Activated naive CD8-positive, alpha-beta T cell treated with anti-CD3 and anti-CD28 coated beads, Interleukin-2, amount 10 ng/mL, durations not matched to agents 7 days and 5 days (primary cell): ENCODE measurements at regions of chr1 and their contacts with region 1.

Region 1: DNA sequence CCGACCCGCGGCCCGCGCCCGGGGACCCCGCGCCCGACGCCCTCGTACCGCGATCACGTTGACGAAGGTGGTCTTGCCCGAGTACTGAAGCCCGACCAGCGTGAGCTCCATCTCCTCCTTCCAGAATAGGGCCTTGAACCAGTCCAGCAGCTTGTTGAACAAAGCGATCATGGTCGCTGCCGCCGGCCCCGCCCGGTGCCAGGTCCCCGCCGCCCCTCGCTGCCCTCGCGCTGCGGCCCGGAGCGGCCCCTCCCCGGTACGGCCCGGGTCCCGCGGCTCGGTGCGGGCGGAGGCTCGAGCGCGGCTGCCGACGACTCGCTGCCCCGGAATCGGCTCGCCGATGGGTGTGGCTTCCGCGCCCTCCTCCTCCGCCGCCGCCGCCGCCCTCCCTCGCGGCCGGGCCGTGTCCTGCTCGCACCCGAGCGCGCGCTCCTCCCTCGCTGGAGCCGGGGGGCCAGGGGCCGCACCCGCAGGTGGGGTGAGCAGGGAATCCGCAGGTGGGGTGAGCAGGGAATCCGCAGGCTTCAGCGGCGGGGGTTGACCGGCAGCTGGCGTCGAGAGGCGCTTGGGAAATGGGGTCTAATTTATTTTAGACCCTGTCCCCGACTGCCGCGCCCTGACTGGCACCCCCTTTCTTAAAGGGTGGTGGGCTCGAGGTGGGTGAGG is at the start of gene ARL8A:
- DNase-seq: peak; percentile 84
- ATAC-seq: peak; percentile 79
- H3K4me3 Mint-ChIP-seq: peak within 1 kb of the TSS; percentile 97
- H3K27ac Mint-ChIP-seq: peak within 1 kb of the TSS; percentile 88
- H3K4me1 Mint-ChIP-seq: peaks cover 25% of the 10 kb centered on the region
- H3K27me3 Mint-ChIP-seq: no peaks in the 10 kb centered on the region
- total RNA-seq, gene ARL8A: 45.9 to 56.5 TPM

Region 2: DNA sequence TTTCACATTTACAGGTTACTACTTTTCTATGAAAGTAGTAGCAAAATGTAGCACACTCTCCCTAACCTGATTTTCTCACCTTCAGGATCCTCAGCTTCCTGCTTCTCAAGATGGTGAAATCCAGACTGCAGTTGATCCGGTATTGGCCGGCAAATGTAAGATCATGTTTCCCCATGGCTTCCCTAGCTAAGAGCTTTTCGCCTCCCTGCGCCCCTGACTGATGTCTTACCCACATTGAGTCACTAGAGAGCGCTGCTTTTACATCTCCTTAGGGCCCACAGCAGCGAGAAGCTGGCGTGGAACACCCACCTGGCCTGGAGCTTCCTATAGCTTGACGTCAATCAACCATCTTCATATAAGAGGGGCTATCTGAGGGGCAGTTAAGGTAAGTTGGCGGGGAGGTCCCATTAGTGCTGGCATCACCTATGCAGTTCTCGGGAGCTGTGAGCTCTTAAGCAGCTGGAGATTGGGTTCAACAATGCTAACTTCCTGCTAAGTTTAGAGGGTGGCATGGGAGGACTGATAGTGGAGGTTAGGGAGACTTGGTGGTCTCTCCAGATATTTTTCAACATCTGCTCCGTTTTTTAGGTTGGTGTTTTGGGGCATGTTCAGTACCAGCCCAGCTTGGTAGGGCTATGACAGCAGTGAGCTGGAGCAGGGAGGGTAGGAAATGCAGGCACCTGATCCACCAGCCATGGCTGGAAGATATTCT is 10.4 kb after region 1 on chr1:
- POLR2A ChIA-PET with region 1: interaction called, 18 read pairs
- DNase-seq: peak; percentile 49
- ATAC-seq: peak; percentile 54
- H3K4me3 Mint-ChIP-seq: no peak overlapping the region
- H3K27ac Mint-ChIP-seq: peak overlapping the region; percentile 66
- H3K4me1 Mint-ChIP-seq: peaks cover 41% of the 10 kb centered on the region
- H3K27me3 Mint-ChIP-seq: no peaks in the 10 kb centered on the region

Region 3: GRCh38 chr1:202160377-202160940 is 15.9 kb after region 1 on chr1 and contains the start of gene PTPN7:
- POLR2A ChIA-PET with region 1: interaction called, 40 read pairs
- DNase-seq: peak; percentile 72
- ATAC-seq: peak; percentile 37
- H3K4me3 Mint-ChIP-seq: peak within 1 kb of the TSS; percentile 96
- H3K27ac Mint-ChIP-seq: peak within 1 kb of the TSS; percentile 100
- H3K4me1 Mint-ChIP-seq: peaks cover 59% of the 10 kb centered on the region
- H3K27me3 Mint-ChIP-seq: no peaks in the 10 kb centered on the region
- total RNA-seq, gene PTPN7: 172 to 181 TPM